Gastrocnemius medialis (tissue), 4 donors: ENCODE measurements at regions of chr9 and their contacts with region 1.

Region 1: DNA sequence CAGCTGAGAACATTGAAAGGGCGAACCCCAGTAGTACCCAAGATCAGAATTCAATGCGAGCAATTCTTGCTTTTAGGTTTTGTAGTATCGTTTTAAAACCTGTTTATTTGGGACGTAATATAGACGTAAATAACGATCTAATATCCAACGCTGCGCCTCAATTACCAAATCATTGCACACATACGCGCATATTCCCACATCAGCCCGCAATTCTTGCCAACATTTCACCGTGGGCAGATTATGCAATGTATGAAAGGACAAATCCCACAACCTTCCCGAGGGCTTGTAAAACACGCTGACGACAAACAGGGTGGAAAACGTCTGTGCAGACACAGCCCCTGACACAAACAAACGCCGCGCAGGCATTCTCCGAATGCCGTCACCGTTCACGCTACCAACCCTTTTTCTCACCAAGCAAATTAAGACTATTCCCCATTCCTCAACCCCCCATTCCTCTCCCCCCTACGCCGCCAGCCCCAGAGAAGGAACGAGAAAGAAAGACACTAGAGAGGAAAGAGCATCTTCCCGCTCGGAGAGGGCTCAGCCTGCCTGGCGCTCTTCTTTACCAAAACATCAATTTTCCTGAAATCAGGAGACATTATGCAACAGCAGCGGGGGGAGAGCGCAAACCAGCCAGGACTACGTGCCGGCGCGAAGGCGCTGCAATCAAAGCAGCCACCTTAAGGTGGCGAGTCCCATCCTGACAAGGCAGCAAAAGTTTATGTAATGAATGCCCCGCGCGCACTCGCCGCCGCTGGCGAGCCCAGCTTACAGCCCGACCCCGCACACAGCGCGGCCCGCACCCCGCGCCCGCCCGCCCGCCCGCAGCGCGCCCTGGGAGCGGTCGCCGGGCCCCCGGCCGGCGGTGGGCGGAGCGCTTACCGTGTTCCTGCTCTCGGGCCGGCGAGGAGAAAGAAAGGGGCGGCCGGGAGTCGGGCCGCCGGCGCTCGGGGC is 597 bp downstream of the NFIL3 start:
- DNase-seq: peak; percentile 68 to 81
- ATAC-seq: peak; percentile 26 to 32
- H3K4me3 ChIP-seq: peak overlapping the region; percentile 76 to 94 (median 83)
- H3K27ac ChIP-seq: peak overlapping the region; percentile 94 to 99 (median 96)
- H3K4me1 ChIP-seq: peaks cover 7 to 30% of the 10 kb centered on the region in 2 donors
- H3K27me3 ChIP-seq: no peaks in the 10 kb centered on the region
- CTCF ChIP-seq: peak in 3 of 5 experiments; percentile 19 to 41 (median 36)
- POLR2A ChIP-seq: peak; percentile 63 to 66

Region 2: GRCh38 chr9:89878687-89879086 is 1544.3 kb before region 1 on chr9:
- in situ Hi-C with region 1: no loop called
- intact Hi-C with region 1: loop called (anchors 5 kb)
- DNase-seq: peak; percentile 93 to 98
- ATAC-seq: peak; percentile 80 to 86
- H3K4me3 ChIP-seq: no peak overlapping the region
- H3K27ac ChIP-seq: peak overlapping the region; percentile 82 to 96 (median 90)
- H3K4me1 ChIP-seq: peaks cover 59 to 66% of the 10 kb centered on the region in 2 donors
- H3K27me3 ChIP-seq: no peaks in the 10 kb centered on the region
- CTCF ChIP-seq: no peak
- POLR2A ChIP-seq: peak; percentile 54 to 70

Region 3: GRCh38 chr9:90921111-90921510 is 501.9 kb before region 1 on chr9:
- in situ Hi-C with region 1: loop called in 3 of 4 experiments (anchors 5 kb)
- intact Hi-C with region 1: loop called (anchors 1 kb)
- DNase-seq: peak; percentile 95 to 99
- ATAC-seq: peak; percentile 77 to 82
- H3K4me3 ChIP-seq: no peak overlapping the region
- H3K27ac ChIP-seq: peak overlapping the region; percentile 81 to 93 (median 92)
- H3K4me1 ChIP-seq: peaks cover 21 to 25% of the 10 kb centered on the region in 2 donors
- H3K27me3 ChIP-seq: no peaks in the 10 kb centered on the region
- CTCF ChIP-seq: peak in 1 of 5 experiments; percentile 19
- POLR2A ChIP-seq: peak in 1 of 2 donors; percentile 46

Region 4: GRCh38 chr9:91053824-91054223 is 369.2 kb before region 1 on chr9:
- in situ Hi-C with region 1: loop called in 3 of 4 experiments (anchors 5 to 25 kb)
- intact Hi-C with region 1: no loop called
- DNase-seq: no peak
- ATAC-seq: no peak
- H3K4me3 ChIP-seq: no peak overlapping the region
- H3K27ac ChIP-seq: no peak overlapping the region
- H3K4me1 ChIP-seq: peaks cover 0 to 3% of the 10 kb centered on the region in 2 donors
- H3K27me3 ChIP-seq: no peaks in the 10 kb centered on the region
- CTCF ChIP-seq: no peak
- POLR2A ChIP-seq: no peak

Region 5: GRCh38 chr9:91101611-91102168 is 321.3 kb before region 1 on chr9:
- in situ Hi-C with region 1: loop called in 1 of 4 experiments (anchors 10 kb)
- intact Hi-C with region 1: loop called (anchors 2 kb)
- DNase-seq: peak in 1 of 2 donors; percentile 49
- ATAC-seq: no peak
- H3K4me3 ChIP-seq: no peak overlapping the region
- H3K27ac ChIP-seq: peak overlapping the region; percentile 81 to 89 (median 84)
- H3K4me1 ChIP-seq: peaks cover 23 to 35% of the 10 kb centered on the region in 2 donors
- H3K27me3 ChIP-seq: no peaks in the 10 kb centered on the region
- CTCF ChIP-seq: no peak
- POLR2A ChIP-seq: no peak

Region 6: GRCh38 chr9:91207729-91208418 is 215.2 kb before region 1 on chr9:
- in situ Hi-C with region 1: loop called in 1 of 4 experiments (anchors 25 kb)
- intact Hi-C with region 1: no loop called
- DNase-seq: no peak
- ATAC-seq: peak; percentile 61 to 84
- H3K4me3 ChIP-seq: peak overlapping the region in 3 of 4 donors; percentile 1 to 36 (median 1)
- H3K27ac ChIP-seq: peak overlapping the region; percentile 63 to 81 (median 74)
- H3K4me1 ChIP-seq: peaks cover 16 to 18% of the 10 kb centered on the region in 2 donors
- H3K27me3 ChIP-seq: no peaks in the 10 kb centered on the region
- CTCF ChIP-seq: no peak
- POLR2A ChIP-seq: peak in 1 of 2 donors; percentile 6

Region 7: GRCh38 chr9:93095205-93096130 is 1672.4 kb after region 1 on chr9:
- in situ Hi-C with region 1: no loop called
- intact Hi-C with region 1: loop called (anchors 5 kb)
- DNase-seq: peak; percentile 99 to 100
- ATAC-seq: peak; percentile 57 to 64
- H3K4me3 ChIP-seq: peak overlapping the region; percentile 67 to 96 (median 86)
- H3K27ac ChIP-seq: peak overlapping the region; percentile 91 to 100 (median 100)
- H3K4me1 ChIP-seq: peaks cover 35 to 43% of the 10 kb centered on the region in 2 donors
- H3K27me3 ChIP-seq: no peaks in the 10 kb centered on the region
- CTCF ChIP-seq: no peak
- POLR2A ChIP-seq: peak; percentile 80 to 88